ENCODE measurements at regions of chr2 and their contacts with region 1.

Region 1: DNA sequence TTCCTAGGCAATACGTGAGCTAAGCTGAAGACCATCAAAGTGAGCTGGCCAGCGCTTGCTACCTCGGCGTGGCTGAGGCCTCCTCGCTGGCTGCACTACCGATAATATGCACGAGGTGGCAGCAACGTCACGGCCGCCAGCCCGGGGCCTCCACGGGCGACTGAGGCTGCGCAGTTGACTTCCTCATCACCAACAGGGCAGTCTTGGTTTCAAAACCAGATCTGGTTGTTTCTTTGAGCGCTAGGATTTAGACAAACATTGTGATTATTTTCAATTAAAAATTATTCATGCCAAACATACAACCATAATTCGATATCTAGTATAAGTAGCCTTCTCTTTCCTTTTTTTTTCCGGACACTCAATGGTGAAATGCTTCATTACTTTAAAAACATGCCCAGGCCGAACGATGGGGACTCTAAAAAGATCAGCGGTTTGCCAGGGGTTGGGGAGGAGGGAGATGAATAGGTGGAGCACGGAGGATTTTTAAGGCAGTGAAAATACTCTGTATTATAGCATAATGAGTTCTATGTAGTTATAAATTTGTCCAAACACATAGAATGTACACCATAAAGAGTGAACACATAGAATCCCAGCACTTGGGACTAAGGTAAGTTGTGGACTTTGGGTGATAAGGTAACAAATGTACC is 52.0 kb downstream of the CYBRD1 start:
- DNase-seq: peak; percentile 54
- ATAC-seq: peak; percentile 99
- H3K4me3 ChIP-seq: no peak overlapping the region
- H3K27ac ChIP-seq: no peak overlapping the region
- H3K4me1 ChIP-seq: 0 out of 4 replicates have a peak, but pooled peaks cover 0 to 6% of the 10 kb centered on the region in 2 experiments
- H3K27me3 ChIP-seq: no peaks in the 10 kb centered on the region
- CTCF ChIP-seq: peak; percentile 73 to 97 (median 88)
- POLR2A ChIP-seq: no peak
- RAD21 ChIP-seq: peak; percentile 97

Region 2: GRCh38 chr2:171800639-171801038 is 226.4 kb after region 1 on chr2:
- CTCF ChIA-PET with region 1: no interaction called
- POLR2A ChIA-PET with region 1: no interaction called
- RAD21 ChIA-PET with region 1: no interaction called
- intact Hi-C with region 1: loop called (anchors 5 kb)
- DNase-seq: no peak
- ATAC-seq: no peak
- H3K4me3 ChIP-seq: no peak overlapping the region
- H3K27ac ChIP-seq: no peak overlapping the region
- H3K4me1 ChIP-seq: peaks cover 0 to 11% of the 10 kb centered on the region in 2 experiments; a peak in 1 of 4 replicates
- H3K27me3 ChIP-seq: no peaks in the 10 kb centered on the region
- CTCF ChIP-seq: no peak
- POLR2A ChIP-seq: no peak
- RAD21 ChIP-seq: no peak

Region 3: GRCh38 chr2:172113617-172114016 is 539.3 kb after region 1 on chr2:
- CTCF ChIA-PET with region 1: interaction called, 12 read pairs
- POLR2A ChIA-PET with region 1: no interaction called
- RAD21 ChIA-PET with region 1: interaction called in 1 of 2 experiments, 5 read pairs
- intact Hi-C with region 1: loop called (anchors 2 kb)
- DNase-seq: no peak
- ATAC-seq: peak; percentile 83
- H3K4me3 ChIP-seq: no peak overlapping the region
- H3K27ac ChIP-seq: no peak overlapping the region
- H3K4me1 ChIP-seq: peaks cover 2% of the 10 kb centered on the region in 2 experiments; a peak in 3 of 4 replicates
- H3K27me3 ChIP-seq: no peaks in the 10 kb centered on the region
- CTCF ChIP-seq: peak; percentile 44 to 67 (median 57); a peak in 5 of 6 replicates
- POLR2A ChIP-seq: no peak
- RAD21 ChIP-seq: peak; percentile 83